H1 (cell line): ENCODE measurements at regions of chr3 and their contacts with region 1.

Region 1: GRCh38 chr3:136042608-136043221 is 77.2 kb downstream of the PPP2R3A start:
- DNase-seq: no peak
- H3K4me3 ChIP-seq: no peak overlapping the region
- H3K27ac ChIP-seq: no peak overlapping the region
- H3K4me1 ChIP-seq: no peaks in the 10 kb centered on the region
- H3K27me3 ChIP-seq: no peaks in the 10 kb centered on the region
- CTCF ChIP-seq: peak in 2 of 3 experiments; percentile 48 to 50; a peak in 3 of 4 replicates
- EP300 ChIP-seq: no peak
- POLR2A ChIP-seq: no peak
- RAD21 ChIP-seq: peak; percentile 59 to 68

Region 2: DNA sequence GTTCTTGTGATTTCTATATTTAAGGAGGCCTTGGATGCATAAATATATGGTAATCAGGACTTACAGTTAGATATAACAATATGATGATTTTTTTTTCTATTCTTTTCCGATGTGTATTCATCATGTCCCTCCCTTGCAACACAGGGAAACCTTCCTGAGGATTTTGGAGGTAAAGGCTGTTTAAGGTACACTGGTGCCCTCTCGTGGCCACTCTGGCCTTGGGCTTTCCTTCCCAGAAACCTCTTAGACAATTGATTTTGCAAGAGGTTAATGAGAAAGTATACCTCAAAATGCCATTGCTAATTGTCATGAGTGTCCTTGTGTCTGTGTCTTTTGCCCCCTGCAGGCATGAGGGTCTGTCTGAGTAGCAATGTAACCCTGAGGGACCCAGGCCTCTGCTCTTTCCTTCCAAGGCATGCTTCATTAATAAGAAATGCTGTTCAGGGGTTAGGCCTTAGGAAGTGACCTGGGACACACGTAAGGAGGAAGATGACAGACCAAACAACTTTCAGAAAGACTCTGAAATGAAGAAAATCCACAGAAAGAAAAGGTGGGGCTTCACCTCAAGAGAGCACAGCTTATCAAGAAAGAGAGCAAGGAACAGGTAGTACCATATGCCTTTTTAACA is 147.5 kb before region 1 on chr3:
- CTCF ChIA-PET with region 1: interaction called, 22 read pairs
- POLR2A ChIA-PET with region 1: no interaction called
- DNase-seq: peak; percentile 58 to 87
- H3K4me3 ChIP-seq: no peak overlapping the region
- H3K27ac ChIP-seq: no peak overlapping the region
- H3K4me1 ChIP-seq: no peaks in the 10 kb centered on the region
- H3K27me3 ChIP-seq: no peaks in the 10 kb centered on the region
- CTCF ChIP-seq: peak; percentile 56 to 85 (median 84)
- EP300 ChIP-seq: no peak
- POLR2A ChIP-seq: no peak
- RAD21 ChIP-seq: peak; percentile 97

Region 3: DNA sequence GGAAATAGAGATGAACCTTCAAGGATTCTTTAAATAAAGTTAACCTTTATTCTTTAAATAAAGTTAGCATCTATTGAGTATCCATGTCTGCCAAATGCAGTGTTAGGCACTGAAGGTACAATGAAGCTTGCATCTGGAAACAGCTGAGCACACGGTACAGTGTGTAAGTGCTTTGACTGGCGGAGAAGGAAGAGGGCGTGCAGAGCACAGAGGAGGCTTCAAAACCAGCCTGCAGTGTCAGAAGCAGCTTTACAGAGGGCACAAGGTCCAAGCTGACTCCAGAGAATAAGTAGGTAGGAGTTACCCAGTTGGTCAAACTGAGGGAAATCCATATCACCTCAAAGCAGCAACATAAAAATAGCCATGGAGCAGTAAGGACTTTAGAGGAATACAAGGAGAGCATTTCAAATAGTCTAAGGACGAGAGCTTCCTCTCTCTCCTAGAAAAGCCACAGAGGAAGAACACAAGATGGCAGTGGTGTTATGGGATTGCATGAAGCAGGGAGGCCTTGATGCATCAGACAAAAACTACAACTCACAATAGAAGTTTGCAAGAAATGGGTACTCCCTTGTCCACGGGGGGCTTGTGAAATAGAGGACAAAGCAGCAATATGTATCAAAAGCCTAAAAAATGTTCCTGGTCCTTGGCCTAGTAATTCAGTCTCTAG is 137.5 kb before region 1 on chr3:
- CTCF ChIA-PET with region 1: interaction called, 95 read pairs
- POLR2A ChIA-PET with region 1: interaction called, 4 read pairs
- DNase-seq: no peak
- H3K4me3 ChIP-seq: no peak overlapping the region
- H3K27ac ChIP-seq: no peak overlapping the region
- H3K4me1 ChIP-seq: no peaks in the 10 kb centered on the region; a peak in 1 of 7 replicates
- H3K27me3 ChIP-seq: no peaks in the 10 kb centered on the region
- CTCF ChIP-seq: peak in 2 of 3 experiments; percentile 41 to 47; a peak in 2 of 4 replicates
- EP300 ChIP-seq: no peak
- POLR2A ChIP-seq: no peak
- RAD21 ChIP-seq: peak; percentile 77 to 79

Region 4: GRCh38 chr3:135918580-135918962 is 124.1 kb before region 1 on chr3:
- CTCF ChIA-PET with region 1: interaction called, 125 read pairs
- POLR2A ChIA-PET with region 1: no interaction called
- DNase-seq: no peak
- H3K4me3 ChIP-seq: no peak overlapping the region
- H3K27ac ChIP-seq: no peak overlapping the region
- H3K4me1 ChIP-seq: no peaks in the 10 kb centered on the region
- H3K27me3 ChIP-seq: no peaks in the 10 kb centered on the region
- CTCF ChIP-seq: peak in 2 of 3 experiments; percentile 27 to 49; a peak in 2 of 4 replicates
- EP300 ChIP-seq: no peak
- POLR2A ChIP-seq: no peak
- RAD21 ChIP-seq: peak; percentile 51 to 57

Region 5: DNA sequence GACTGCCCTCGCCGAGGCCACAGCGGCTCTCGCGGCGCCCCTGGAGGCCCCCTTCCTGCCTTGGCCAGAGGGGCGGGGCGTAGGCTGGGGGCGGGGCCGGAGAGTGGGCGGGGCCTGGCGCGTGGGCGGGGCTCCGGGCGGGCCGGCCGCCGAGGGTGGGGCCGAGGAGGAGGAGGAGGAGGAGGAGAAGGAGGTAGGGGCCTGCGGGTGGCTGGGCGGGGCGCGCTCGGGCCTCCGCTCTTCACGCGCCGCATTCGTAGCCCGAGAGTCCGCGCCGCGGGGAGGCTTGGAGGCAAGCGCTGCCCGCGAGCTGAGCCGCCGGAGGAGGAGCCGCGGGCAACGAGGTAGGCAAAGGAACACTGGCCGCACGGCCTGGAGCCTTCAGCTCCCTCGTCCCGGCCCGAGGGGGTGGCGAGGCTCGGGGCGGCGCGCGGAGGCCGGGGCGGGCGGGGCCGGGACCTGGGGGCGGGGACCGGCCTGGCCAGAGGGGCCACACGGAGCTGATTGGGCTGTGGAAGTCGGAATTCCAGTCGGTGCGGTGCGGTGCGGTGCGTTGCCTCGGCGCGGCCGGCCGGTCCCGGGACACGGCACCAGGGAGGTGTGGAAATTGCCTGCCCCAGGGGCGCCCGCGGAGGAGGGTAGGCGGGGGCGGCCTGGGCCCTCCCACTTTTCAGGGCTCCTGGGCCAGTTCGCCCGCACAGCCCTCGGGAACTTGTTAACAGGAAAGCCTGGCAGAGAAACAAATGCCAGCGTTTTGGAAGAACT is 77.0 kb before region 1 on chr3 and contains the start of gene PPP2R3A:
- CTCF ChIA-PET with region 1: interaction called, 22 read pairs
- POLR2A ChIA-PET with region 1: interaction called, 7 read pairs
- DNase-seq: peak; percentile 62 to 93
- H3K4me3 ChIP-seq: peak within 1 kb of the TSS; percentile 62 to 84 (median 78)
- H3K27ac ChIP-seq: peak within 1 kb of the TSS; percentile 71
- H3K4me1 ChIP-seq: peaks cover 10 to 25% (median 16%) of the 10 kb centered on the region in 4 experiments; a peak in 6 of 7 replicates
- H3K27me3 ChIP-seq: no peaks in the 10 kb centered on the region
- CTCF ChIP-seq: no peak
- EP300 ChIP-seq: no peak
- POLR2A ChIP-seq: peak; percentile 76 to 80
- RAD21 ChIP-seq: no peak
- total RNA-seq, gene PPP2R3A: 14.0 and 15.2 TPM in 2 replicates